ENCODE measurements at regions of chr9 and their contacts with region 1.

Region 1: DNA sequence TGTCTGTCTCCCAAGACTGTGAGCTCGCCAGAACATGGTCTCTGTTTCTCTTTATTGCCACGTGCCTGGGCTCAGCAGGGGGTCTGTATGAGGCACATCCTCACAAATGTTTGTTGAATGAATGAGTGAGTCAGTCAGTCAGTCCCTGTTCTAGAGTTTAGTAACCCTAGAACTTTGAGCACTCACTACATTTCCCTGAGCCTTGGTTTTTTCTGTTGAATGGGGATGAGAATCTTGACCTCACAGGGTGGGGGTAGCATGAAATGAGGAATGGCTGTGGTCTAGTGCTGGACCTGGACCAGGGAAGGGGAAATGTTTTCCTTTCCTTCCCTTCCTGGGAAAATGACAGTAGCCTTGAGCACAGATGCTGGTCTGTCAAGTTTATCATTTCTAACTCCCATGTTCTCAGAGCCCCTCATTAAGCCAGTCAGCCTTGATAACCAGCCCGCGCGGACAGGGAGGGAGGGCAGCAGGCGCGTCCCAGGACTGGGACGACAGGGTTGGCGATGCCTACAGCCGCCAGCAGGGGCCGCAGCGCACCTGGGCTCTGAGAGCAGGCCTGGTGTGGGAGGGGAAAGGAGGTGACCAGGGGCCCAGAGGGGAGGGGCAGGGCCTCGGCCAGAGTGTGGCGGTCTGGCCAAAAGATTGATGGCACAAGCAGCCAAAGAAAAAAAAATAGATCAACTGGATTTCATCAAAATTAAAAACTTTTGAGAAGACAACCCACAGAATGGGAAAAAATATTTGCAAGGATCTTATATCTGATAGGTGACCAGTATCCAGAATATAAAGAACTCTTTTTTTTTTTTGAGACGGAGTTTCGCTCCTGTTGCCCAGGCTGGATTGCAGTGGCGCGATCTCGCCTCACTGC is 24.1 kb upstream of the WNK2 start:
- DNase-seq: peak; percentile 89
- H3K4me3 ChIP-seq: no peak overlapping the region
- H3K27ac ChIP-seq: no peak overlapping the region
- H3K4me1 ChIP-seq: peaks cover 0 to 7% (median 6%) of the 10 kb centered on the region in 4 donors
- H3K27me3 ChIP-seq: no peaks in the 10 kb centered on the region
- CTCF ChIP-seq: peak; percentile 95 to 98 (median 97)
- EP300 ChIP-seq: no peak
- POLR2A ChIP-seq: no peak

Region 2: GRCh38 chr9:93262537-93263242 is 102.9 kb after region 1 on chr9:
- in situ Hi-C with region 1: no loop called
- intact Hi-C with region 1: no loop called
- DNase-seq: no peak
- H3K4me3 ChIP-seq: no peak overlapping the region
- H3K27ac ChIP-seq: peak overlapping the region in 2 of 4 donors; percentile 4 to 28
- H3K4me1 ChIP-seq: peaks cover 0 to 9% (median 3%) of the 10 kb centered on the region in 4 donors
- H3K27me3 ChIP-seq: no peaks in the 10 kb centered on the region
- CTCF ChIP-seq: no peak
- EP300 ChIP-seq: no peak
- POLR2A ChIP-seq: no peak

Region 3: DNA sequence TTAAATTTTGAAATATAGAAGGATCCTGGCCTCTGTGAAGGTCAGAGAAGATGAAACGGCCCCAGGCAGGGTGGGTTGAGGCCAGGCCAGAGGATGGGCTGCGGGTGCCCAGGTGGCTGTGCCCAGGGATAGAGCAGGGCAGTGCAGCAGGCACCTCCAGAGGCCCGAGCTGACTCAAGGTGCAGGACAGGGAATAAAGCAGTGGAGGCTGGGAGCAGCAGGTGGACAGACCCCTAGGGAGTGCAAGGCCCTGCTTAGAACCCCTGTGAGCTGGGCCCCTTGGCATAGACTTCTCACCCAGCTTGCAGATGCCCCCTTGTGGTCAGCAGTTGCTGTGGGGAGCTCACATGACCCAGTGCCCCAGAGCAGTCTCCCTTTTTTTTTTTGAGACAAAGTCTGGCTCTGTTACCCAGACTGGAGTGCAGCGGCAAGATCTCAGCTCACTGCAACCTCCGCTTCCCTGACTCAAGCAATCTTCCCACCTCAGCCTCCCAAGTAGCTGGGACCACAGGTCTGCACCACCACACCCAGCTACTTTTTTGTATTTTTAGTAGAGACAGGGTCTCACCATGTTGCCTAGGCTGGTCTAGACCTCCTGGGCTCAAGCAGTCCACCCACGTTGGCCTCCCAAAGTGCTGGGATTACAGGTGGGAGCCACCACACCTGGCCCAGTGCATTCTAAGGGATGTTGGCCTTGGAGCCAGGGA is 142.9 kb after region 1 on chr9:
- in situ Hi-C with region 1: loop called (anchors 10 kb)
- intact Hi-C with region 1: loop called (anchors 5 kb)
- DNase-seq: peak; percentile 73
- H3K4me3 ChIP-seq: no peak overlapping the region
- H3K27ac ChIP-seq: peak overlapping the region in 2 of 4 donors; percentile 0 to 1
- H3K4me1 ChIP-seq: peaks cover 7 to 41% (median 30%) of the 10 kb centered on the region in 4 donors
- H3K27me3 ChIP-seq: no peaks in the 10 kb centered on the region
- CTCF ChIP-seq: peak; percentile 54 to 70 (median 59)
- EP300 ChIP-seq: no peak
- POLR2A ChIP-seq: no peak

Region 4: GRCh38 chr9:93427655-93428379 is 268.0 kb after region 1 on chr9:
- in situ Hi-C with region 1: loop called in 1 of 4 experiments (anchors 25 kb)
- intact Hi-C with region 1: no loop called
- DNase-seq: peak; percentile 54
- H3K4me3 ChIP-seq: no peak overlapping the region
- H3K27ac ChIP-seq: no peak overlapping the region
- H3K4me1 ChIP-seq: peaks cover 0 to 7% (median 0%) of the 10 kb centered on the region in 4 donors
- H3K27me3 ChIP-seq: no peaks in the 10 kb centered on the region
- CTCF ChIP-seq: peak; percentile 28 to 48 (median 33)
- EP300 ChIP-seq: no peak
- POLR2A ChIP-seq: no peak

Region 5: DNA sequence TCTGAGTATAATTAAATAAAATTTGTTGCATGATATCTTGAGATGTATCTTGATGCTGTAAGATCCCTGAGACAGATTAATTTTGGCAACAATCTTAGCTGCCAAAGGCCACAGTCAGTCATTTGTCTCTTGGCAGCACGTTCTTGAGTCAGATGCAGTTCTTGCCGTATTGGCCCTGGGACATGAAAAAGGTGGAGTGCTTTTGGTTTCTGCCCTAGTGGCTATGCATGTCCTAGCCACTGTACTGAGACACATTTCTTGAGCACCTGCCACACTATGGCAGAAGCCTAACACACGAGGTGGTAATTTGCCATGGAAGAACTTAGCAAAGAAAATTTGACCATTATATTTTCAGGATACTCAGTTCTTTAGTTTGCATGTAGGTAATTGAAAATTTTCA is 371.5 kb after region 1 on chr9:
- in situ Hi-C with region 1: loop called in 1 of 4 experiments (anchors 25 kb)
- intact Hi-C with region 1: no loop called
- DNase-seq: no peak
- H3K4me3 ChIP-seq: no peak overlapping the region
- H3K27ac ChIP-seq: no peak overlapping the region
- H3K4me1 ChIP-seq: peaks cover 0 to 13% (median 0%) of the 10 kb centered on the region in 4 donors
- H3K27me3 ChIP-seq: no peaks in the 10 kb centered on the region
- CTCF ChIP-seq: peak in 4 of 5 experiments; percentile 20 to 41 (median 29)
- EP300 ChIP-seq: no peak
- POLR2A ChIP-seq: no peak

Region 6: GRCh38 chr9:93566408-93567270 is 406.8 kb after region 1 on chr9:
- in situ Hi-C with region 1: loop called in 2 of 4 experiments (anchors 25 kb)
- intact Hi-C with region 1: no loop called
- DNase-seq: peak; percentile 99
- H3K4me3 ChIP-seq: peak overlapping the region; percentile 21 to 56 (median 44)
- H3K27ac ChIP-seq: peak overlapping the region; percentile 91 to 95 (median 94)
- H3K4me1 ChIP-seq: peaks cover 4 to 13% (median 8%) of the 10 kb centered on the region in 4 donors
- H3K27me3 ChIP-seq: no peaks in the 10 kb centered on the region
- CTCF ChIP-seq: peak; percentile 90 to 96 (median 94)
- EP300 ChIP-seq: no peak
- POLR2A ChIP-seq: peak; percentile 93

Region 7: DNA sequence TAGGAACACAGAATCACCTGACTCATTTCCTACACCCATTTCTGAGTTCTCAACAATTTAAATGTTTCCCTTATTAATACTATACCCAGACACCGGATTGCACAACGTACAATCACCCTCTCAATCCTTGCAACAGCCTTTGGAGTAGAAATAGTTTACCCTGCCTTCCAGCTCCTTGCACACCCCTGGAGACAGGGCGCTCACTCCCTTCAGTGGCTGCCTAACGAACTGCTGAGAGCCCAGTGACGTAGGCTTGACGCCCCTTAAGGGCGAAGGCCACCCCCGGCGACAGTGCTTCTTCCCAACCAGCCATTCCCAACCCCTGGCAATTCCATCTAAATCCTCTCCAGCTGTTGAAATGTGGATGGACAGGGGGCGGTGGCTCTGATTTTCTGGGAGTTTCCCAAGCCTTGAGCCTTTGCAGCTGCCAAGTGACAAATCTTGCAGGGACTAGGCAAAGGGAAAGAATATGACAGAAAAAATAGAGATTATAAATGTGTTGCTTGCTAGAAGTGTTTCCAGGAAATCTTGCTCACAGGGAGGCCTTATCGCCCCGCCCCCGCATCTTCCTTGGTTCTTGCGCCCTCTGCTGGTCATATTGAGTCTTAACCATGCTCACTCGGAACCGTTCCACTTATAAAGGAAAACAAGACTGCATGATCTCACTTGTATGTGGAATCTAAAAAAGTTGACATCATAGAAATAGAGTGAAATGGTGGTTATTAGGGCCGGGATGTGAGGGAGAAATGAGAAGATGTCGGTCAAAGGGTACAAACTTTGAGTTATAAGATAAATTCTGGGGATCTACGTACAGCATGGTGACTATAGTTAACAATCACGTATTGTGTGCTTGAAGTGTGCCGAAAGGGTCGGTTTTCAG is 803.0 kb after region 1 on chr9:
- in situ Hi-C with region 1: loop called in 1 of 4 experiments (anchors 25 kb)
- intact Hi-C with region 1: no loop called
- DNase-seq: peak; percentile 83
- H3K4me3 ChIP-seq: no peak overlapping the region
- H3K27ac ChIP-seq: no peak overlapping the region
- H3K4me1 ChIP-seq: peaks cover 18 to 33% (median 27%) of the 10 kb centered on the region in 4 donors
- H3K27me3 ChIP-seq: peaks cover 43% of the 10 kb centered on the region
- CTCF ChIP-seq: peak; percentile 77 to 85 (median 82)
- EP300 ChIP-seq: no peak
- POLR2A ChIP-seq: no peak

Measured in transverse colon (tissue), 4 donors.